ENCODE measurements at regions of chr15 and their contacts with region 1.

Region 1: GRCh38 chr15:83843471-83843871 is 189.5 kb downstream of the ADAMTSL3 start:
- DNase-seq: no peak
- H3K4me3 ChIP-seq: no peak overlapping the region
- H3K27ac ChIP-seq: no peak overlapping the region
- H3K4me1 ChIP-seq: no peaks in the 10 kb centered on the region
- H3K27me3 ChIP-seq: no peaks in the 10 kb centered on the region
- CTCF ChIP-seq: no peak
- POLR2A ChIP-seq: no peak

Region 2: GRCh38 chr15:83545804-83546511 is 297.5 kb before region 1 on chr15:
- intact Hi-C with region 1: no loop called
- DNase-seq: no peak
- H3K4me3 ChIP-seq: no peak overlapping the region
- H3K27ac ChIP-seq: no peak overlapping the region
- H3K4me1 ChIP-seq: no peaks in the 10 kb centered on the region
- H3K27me3 ChIP-seq: no peaks in the 10 kb centered on the region
- CTCF ChIP-seq: no peak
- POLR2A ChIP-seq: no peak

Region 3: GRCh38 chr15:83769416-83770004 is 74.0 kb before region 1 on chr15:
- intact Hi-C with region 1: loop called (anchors 5 kb)
- DNase-seq: no peak
- H3K4me3 ChIP-seq: no peak overlapping the region
- H3K27ac ChIP-seq: no peak overlapping the region
- H3K4me1 ChIP-seq: no peaks in the 10 kb centered on the region
- H3K27me3 ChIP-seq: no peaks in the 10 kb centered on the region
- CTCF ChIP-seq: no peak
- POLR2A ChIP-seq: no peak

Region 4: GRCh38 chr15:83904107-83905040 is 60.9 kb after region 1 on chr15:
- intact Hi-C with region 1: loop called (anchors 5 kb)
- DNase-seq: no peak
- H3K4me3 ChIP-seq: no peak overlapping the region
- H3K27ac ChIP-seq: no peak overlapping the region
- H3K4me1 ChIP-seq: no peaks in the 10 kb centered on the region
- H3K27me3 ChIP-seq: no peaks in the 10 kb centered on the region
- CTCF ChIP-seq: no peak
- POLR2A ChIP-seq: no peak

Measured in prostate gland (tissue), 2 donors.